GM18951 (cell line): ENCODE measurements at regions of chr6 and their contacts with region 1.

Region 1: GRCh38 chr6:167212713-167213005 is 54.9 kb upstream of the GPR31 start:
- POLR2A ChIP-seq: no peak

Region 2: GRCh38 chr6:166202321-166202733 is 1010.3 kb before region 1 on chr6:
- in situ Hi-C with region 1: no loop called
- POLR2A ChIP-seq: no peak

Region 3: DNA sequence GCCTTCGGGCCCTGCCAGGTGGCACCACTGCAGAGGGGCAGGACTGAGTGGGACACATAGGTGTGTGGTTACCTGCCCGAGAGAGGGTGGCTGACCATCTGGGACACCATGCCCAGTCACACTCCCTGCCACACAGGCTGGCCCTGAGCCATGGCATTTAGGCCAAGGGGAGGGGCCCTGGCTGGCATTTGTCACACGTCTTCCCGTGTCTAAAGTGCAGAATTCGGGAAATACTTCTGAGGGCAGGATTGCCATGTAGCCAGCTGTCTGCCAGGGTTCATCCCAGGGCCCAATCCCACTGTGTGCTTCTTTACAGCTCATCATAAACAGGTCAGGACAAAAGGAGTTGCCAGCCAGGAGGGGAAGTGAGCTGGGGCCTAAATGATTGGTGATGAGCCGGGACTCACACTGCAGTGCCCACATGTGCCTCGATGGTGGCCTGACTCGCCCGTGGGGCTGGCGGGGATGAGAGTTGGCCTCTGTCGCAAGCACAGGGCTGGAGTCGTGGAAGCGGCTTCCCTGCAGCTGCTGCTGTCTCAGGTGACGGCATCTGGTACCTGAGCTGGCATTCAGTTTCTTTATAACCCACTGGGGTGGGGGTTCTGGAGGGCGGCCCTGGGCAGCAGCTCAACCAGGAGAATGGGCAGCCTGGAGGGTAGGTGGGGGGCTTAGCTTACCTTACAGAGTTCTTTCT is 72.6 kb after region 1 on chr6:
- in situ Hi-C with region 1: loop called (anchors 10 kb)
- POLR2A ChIP-seq: no peak